Activated CD4-positive, alpha-beta T cell treated with anti-CD3 and anti-CD28 coated beads, Interleukin-2, amount 10 ng/mL, durations not matched to agents 7 days and 5 days (primary cell): ENCODE measurements at regions of chr21 and their contacts with region 1.

Region 1: GRCh38 chr21:42309753-42310221 is 5.4 kb downstream of the TFF3 start:
- DNase-seq: peak; percentile 78
- H3K4me3 Mint-ChIP-seq: no peak overlapping the region
- H3K27ac Mint-ChIP-seq: no peak overlapping the region
- H3K4me1 Mint-ChIP-seq: peaks cover 15% of the 10 kb centered on the region
- H3K27me3 Mint-ChIP-seq: peaks cover 14% of the 10 kb centered on the region

Region 2: DNA sequence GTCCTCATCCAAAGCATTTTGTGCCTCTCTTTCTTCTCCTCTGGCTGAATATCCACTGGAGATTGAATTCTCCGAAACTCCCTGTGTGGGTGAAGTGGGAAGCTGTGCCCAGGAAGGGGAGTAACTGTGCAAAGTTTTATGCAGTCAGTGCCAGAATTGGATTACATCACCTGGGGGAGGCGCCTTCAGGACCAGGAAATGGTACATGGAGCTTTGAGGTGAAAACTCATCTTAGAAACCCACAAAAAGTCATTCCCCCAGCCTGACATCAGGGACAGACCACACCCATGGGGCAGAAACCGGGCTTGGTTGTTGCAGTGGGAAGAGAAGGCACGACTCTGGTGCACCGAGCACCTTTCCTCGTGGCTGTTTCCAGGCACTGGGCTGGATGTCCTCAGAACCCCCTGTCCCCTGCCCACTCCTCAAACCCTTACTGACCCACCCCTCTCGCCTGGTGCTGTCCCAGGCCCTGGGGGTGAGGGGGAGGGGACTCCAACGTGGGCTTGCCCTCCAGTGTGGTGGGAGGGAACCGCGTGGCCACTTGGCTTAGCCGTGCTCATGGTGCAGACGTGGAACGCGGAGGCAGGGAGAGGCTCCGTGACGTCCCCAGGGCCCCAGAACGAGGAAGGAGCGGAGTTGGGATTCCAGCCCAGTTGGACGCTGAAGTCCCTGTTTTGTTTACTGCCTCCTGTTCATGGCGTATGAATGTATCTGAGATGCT is 10.3 kb before region 1 on chr21:
- CTCF ChIA-PET with region 1: interaction called, 10 read pairs
- POLR2A ChIA-PET with region 1: no interaction called
- DNase-seq: peak; percentile 63
- H3K4me3 Mint-ChIP-seq: no peak overlapping the region
- H3K27ac Mint-ChIP-seq: peak overlapping the region; percentile 70
- H3K4me1 Mint-ChIP-seq: peaks cover 21% of the 10 kb centered on the region
- H3K27me3 Mint-ChIP-seq: no peaks in the 10 kb centered on the region

Region 3: DNA sequence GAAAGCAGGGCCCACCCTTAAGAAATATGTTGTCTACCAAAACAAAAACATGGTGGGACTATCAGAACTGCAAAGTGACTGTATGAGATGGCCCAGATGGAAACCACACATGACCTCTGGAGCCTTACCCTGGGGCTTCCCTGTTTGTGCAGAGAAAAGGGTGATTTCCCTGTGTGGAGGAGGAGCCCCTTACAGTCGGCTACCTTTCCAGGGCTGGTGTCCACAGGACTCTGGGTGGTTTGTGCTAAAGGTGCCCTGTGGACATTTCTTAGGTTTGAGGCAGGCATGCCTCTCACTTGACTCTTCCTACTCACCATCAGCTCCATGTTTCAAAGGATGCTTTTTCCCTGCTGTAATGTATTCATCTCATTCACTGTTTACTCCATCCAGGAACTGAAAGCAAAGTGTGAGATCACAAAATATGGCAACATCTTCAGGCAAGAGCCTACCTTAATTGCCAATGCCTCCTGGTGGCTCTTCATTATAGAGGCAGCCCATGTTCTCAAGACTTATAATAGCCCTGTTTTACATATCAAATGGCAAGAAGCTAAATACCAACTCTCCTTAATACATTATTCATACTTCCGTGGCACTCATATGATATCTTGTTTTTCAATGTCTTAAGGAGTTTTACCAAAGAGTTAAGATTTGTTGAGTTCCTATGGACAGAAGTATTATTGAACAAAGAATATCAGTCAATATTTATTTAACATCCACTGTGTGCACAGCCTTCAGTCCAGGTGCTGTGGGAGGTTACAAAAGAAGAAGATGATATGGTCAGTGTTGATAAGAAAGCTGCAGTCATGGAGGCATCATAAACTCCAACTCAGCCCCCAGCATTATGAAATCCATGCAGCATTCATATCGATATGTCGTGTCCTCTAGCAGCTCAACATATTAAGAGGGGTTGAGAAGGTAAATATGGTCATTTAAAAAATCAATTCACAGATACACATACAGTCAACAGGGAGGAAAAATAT is 20.9 kb after region 1 on chr21:
- CTCF ChIA-PET with region 1: no interaction called
- POLR2A ChIA-PET with region 1: no interaction called
- DNase-seq: no peak
- H3K4me3 Mint-ChIP-seq: no peak overlapping the region
- H3K27ac Mint-ChIP-seq: no peak overlapping the region
- H3K4me1 Mint-ChIP-seq: no peaks in the 10 kb centered on the region
- H3K27me3 Mint-ChIP-seq: peaks cover 28% of the 10 kb centered on the region

Region 4: GRCh38 chr21:42400525-42400924 is 90.7 kb after region 1 on chr21:
- CTCF ChIA-PET with region 1: interaction called, 12 read pairs
- POLR2A ChIA-PET with region 1: no interaction called
- DNase-seq: no peak
- H3K4me3 Mint-ChIP-seq: no peak overlapping the region
- H3K27ac Mint-ChIP-seq: no peak overlapping the region
- H3K4me1 Mint-ChIP-seq: peaks cover 57% of the 10 kb centered on the region
- H3K27me3 Mint-ChIP-seq: no peaks in the 10 kb centered on the region